Right cardiac atrium (tissue), 5 donors: ENCODE measurements at regions of chr1 and their contacts with region 1.

Region 1: DNA sequence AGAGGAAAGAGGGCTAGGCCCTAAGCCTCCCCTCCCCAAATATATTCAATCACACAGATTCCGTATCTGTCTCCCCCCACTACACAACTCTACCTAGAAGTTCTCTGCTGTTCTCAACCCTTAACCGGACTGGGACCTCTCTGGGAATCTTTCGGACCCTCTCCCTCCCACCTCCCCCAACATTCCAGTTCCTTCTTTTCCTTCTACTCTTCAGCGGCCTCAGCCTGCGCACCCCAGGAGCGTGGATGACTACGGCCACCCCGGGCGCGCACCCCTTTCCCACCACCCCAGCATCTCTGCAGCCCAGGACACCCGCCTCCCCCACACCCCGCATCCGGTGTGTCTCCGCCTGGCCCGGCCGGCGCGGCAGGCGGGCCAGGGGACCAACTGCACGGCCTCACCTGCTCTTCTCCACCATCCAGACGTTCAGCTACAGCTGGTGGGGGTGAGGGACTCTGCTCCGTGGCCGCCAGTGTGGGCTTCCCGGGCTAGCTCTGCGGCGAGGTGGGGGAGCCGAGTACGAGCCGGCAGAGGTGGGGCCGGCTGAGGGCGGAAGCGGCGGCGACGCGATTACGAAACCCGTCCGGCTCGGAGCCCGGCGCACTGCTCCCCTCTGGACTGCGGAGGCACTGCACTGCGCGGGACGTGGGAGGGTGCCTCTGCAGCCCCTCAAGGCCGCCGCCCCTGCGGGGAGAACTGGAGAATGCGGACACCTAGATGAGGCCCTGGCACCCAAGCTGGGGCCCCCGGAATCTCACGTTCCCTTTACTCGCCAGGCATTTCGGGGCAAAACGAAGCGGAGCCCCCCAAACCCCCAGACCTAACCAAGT is at the start of gene CDC42SE1:
- DNase-seq: peak; percentile 89 to 95 (median 94)
- ATAC-seq: peak; percentile 94
- H3K4me3 ChIP-seq: peak within 1 kb of the TSS; percentile 84
- H3K27ac ChIP-seq: peak within 1 kb of the TSS; percentile 86
- H3K4me1 ChIP-seq: peaks cover 12% of the 10 kb centered on the region
- H3K27me3 ChIP-seq: no peaks in the 10 kb centered on the region
- total RNA-seq, gene CDC42SE1: 34.7 to 53.6 (median 36.6) TPM

Region 2: GRCh38 chr1:150813058-150813707 is 246.1 kb before region 1 on chr1:
- intact Hi-C with region 1: no loop called
- DNase-seq: peak; percentile 51 to 84 (median 75)
- ATAC-seq: peak; percentile 70 to 81
- H3K4me3 ChIP-seq: no peak overlapping the region
- H3K27ac ChIP-seq: no peak overlapping the region
- H3K4me1 ChIP-seq: no peaks in the 10 kb centered on the region
- H3K27me3 ChIP-seq: no peaks in the 10 kb centered on the region

Region 3: GRCh38 chr1:150961799-150962198 is 97.5 kb before region 1 on chr1:
- intact Hi-C with region 1: no loop called
- DNase-seq: no peak
- ATAC-seq: no peak
- H3K4me3 ChIP-seq: no peak overlapping the region
- H3K27ac ChIP-seq: no peak overlapping the region
- H3K4me1 ChIP-seq: no peaks in the 10 kb centered on the region
- H3K27me3 ChIP-seq: no peaks in the 10 kb centered on the region

Region 4: DNA sequence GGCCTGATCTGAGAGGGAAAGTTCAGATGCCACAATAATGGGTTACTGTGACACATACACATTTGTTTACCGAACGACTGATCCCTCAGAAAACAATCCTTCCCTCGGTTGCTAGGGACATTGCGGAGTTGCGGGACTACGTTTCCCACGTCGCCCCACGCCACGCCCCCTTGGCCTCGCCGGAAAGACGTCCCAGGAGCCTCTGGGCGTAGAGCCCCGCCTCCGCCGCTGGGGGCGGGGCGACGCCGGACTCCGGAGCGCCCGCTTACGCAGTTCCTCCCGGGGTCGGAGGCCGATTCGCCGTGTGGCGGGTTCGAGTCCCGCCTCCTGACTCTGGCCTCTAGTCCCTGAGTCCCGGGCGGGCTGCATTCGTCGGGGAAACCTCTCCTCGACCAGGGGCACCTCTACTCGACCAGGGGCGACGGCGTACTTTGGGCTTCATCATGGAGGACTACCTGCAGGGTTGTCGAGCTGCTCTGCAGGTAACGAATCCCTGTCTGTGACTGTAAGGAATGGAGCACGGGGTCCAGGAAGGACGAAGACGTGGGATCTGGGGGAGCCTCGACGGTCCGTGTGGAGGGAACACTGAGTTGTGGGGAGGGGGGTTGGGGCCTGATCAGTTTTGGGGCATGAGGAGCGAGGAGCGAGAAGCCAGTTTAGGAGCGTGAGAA is 51.0 kb before region 1 on chr1 and contains the start of gene PRUNE1:
- intact Hi-C with region 1: loop called in 1 of 4 experiments (anchors 10 kb)
- DNase-seq: peak; percentile 98 to 99 (median 99)
- ATAC-seq: peak; percentile 93
- H3K4me3 ChIP-seq: peak within 1 kb of the TSS; percentile 87
- H3K27ac ChIP-seq: peak within 1 kb of the TSS; percentile 97
- H3K4me1 ChIP-seq: peaks cover 5% of the 10 kb centered on the region
- H3K27me3 ChIP-seq: no peaks in the 10 kb centered on the region
- total RNA-seq, gene PRUNE1: 45.8 to 66.0 (median 49.8) TPM

Region 5: GRCh38 chr1:151364996-151365395 is 305.7 kb after region 1 on chr1:
- intact Hi-C with region 1: no loop called
- DNase-seq: no peak
- ATAC-seq: no peak
- H3K4me3 ChIP-seq: no peak overlapping the region
- H3K27ac ChIP-seq: no peak overlapping the region
- H3K4me1 ChIP-seq: no peaks in the 10 kb centered on the region
- H3K27me3 ChIP-seq: no peaks in the 10 kb centered on the region